Dendritic cell treated with granulocyte-macrophage colony-stimulating factor and Interleukin-4, amounts not matched to agents 40 ng/mL and 50 ng/mL, for 4 days (primary cell): ENCODE measurements at regions of chr15 and their contacts with region 1.

Region 1: DNA sequence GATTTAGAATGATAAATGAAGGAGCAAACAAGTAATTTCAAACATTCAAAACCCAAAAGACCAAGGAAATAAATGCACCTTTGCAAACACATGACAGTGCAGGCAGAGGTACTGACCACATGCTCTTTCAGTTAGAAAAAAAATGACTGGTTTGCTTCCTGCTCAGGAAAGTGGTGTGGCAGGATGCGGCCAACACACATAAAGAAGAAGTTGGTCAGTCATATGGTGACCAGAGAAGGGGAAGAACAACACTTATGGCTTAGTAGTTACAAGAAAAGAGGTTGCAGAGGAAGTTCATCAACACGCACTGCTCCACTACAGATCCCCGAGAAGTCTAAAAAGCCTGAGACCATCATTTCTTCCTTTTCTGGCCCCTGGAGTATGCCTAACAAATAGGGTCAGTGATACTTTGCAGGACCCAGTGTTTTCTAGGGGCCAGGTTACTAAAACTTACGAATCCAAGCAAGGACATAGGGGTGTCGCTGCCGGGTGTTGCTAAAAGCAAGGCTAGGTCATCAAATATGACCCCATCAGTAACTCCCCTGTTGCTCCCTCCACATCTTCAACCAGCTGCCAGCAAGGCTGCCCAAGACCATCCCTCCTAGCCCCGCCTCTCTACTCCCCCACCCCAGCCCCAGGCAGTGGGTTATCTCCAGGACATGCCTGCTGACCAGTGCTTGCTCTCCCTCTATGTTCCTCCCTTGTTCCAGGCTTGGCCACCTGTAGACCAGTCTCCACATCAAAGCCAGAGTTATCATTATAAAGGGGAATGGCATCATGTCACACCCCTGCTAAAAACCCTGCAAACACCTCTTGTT is 11.2 kb downstream of the ATP8B4 start:
- H3K4me3 Mint-ChIP-seq: peak overlapping the region; percentile 70
- H3K27ac Mint-ChIP-seq: peak overlapping the region; percentile 88
- H3K4me1 Mint-ChIP-seq: peaks cover 67% of the 10 kb centered on the region
- H3K27me3 Mint-ChIP-seq: no peaks in the 10 kb centered on the region

Region 2: GRCh38 chr15:50066192-50066591 is 41.6 kb before region 1 on chr15:
- intact Hi-C with region 1: loop called (anchors 5 kb)
- H3K4me3 Mint-ChIP-seq: no peak overlapping the region
- H3K27ac Mint-ChIP-seq: peak overlapping the region; percentile 65
- H3K4me1 Mint-ChIP-seq: peaks cover 41% of the 10 kb centered on the region
- H3K27me3 Mint-ChIP-seq: no peaks in the 10 kb centered on the region

Region 3: DNA sequence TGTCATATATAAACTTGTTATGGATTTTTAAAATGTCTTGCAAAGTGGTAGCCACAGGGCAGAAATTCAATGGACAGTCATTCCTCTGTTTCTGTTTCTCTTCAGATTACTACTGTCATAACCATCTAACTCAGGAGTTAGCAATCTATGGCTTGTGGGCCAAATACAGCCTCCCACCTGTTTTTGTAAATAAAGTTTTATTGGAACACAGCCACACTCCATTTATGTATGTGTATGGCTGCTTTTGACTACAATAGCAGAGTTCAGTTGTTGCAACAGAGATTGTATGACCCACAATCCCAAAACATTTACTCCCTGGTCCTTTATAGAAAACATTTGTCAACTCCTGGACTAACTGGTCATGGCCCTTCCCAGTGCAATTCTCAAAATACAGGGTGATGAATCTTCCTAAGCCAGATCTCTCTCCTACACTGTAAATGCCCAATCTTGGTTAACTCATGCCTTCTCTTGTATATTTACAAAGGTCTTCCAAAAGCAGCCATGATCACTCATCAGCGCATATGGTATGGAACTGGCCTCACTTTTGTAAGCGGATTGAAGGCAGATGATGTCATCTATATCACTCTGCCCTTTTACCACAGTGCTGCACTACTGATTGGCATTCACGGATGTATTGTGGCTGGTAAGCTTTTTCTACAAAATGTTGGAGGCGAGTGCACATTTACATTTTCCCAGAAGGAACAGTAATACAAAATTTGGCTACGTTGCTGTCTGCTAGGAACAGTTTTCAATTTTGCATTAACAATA is 94.4 kb after region 1 on chr15:
- intact Hi-C with region 1: no loop called
- H3K4me3 Mint-ChIP-seq: no peak overlapping the region
- H3K27ac Mint-ChIP-seq: no peak overlapping the region
- H3K4me1 Mint-ChIP-seq: no peaks in the 10 kb centered on the region
- H3K27me3 Mint-ChIP-seq: no peaks in the 10 kb centered on the region